ENCODE measurements at regions of chr17 and their contacts with region 1.

Region 1: DNA sequence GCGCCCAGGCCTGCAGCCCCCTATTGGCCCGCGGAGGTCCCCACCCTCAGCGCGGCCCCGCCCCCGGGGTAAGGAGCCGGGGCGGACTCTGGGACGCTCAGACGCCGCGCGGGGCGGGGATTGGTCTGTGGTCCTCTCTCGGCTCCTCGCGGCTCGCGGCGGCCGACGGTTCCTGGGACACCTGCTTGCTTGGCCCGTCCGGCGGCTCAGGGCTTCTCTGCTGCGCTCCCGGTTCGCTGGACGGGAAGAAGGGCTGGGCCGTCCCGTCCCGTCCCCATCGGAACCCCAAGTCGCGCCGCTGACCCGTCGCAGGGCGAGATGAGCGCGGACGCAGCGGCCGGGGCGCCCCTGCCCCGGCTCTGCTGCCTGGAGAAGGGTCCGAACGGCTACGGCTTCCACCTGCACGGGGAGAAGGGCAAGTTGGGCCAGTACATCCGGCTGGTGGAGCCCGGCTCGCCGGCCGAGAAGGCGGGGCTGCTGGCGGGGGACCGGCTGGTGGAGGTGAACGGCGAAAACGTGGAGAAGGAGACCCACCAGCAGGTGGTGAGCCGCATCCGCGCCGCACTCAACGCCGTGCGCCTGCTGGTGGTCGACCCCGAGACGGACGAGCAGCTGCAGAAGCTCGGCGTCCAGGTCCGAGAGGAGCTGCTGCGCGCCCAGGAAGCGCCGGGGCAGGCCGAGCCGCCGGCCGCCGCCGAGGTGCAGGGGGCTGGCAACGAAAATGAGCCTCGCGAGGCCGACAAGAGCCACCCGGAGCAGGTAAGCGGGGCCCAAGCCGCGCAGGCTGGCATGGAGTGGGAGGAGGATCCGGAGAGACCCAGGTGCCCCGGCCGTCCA is at the start of gene NHERF1:
- DNase-seq: peak; percentile 83 to 98 (median 92)
- ATAC-seq: peak; percentile 83
- H3K4me3 ChIP-seq: peak within 1 kb of the TSS; percentile 94 to 98
- H3K4me3 Mint-ChIP-seq: peak within 1 kb of the TSS; percentile 98
- H3K27ac ChIP-seq: peak within 1 kb of the TSS; percentile 60 to 80
- H3K27ac Mint-ChIP-seq: peak within 1 kb of the TSS; percentile 96
- H3K4me1 ChIP-seq: peaks cover 61% of the 10 kb centered on the region
- H3K4me1 Mint-ChIP-seq: peaks cover 67% of the 10 kb centered on the region
- H3K27me3 ChIP-seq: no peaks in the 10 kb centered on the region
- H3K27me3 Mint-ChIP-seq: no peaks in the 10 kb centered on the region
- CTCF ChIP-seq: no peak
- total RNA-seq, gene NHERF1: 72.5 to 73.7 TPM

Region 2: GRCh38 chr17:74190172-74190571 is 558.6 kb before region 1 on chr17:
- CTCF ChIA-PET with region 1: no interaction called
- POLR2A ChIA-PET with region 1: no interaction called
- intact Hi-C with region 1: no loop called
- DNase-seq: peak in 1 of 9 experiments; percentile 50
- ATAC-seq: peak; percentile 51
- H3K4me3 ChIP-seq: no peak overlapping the region
- H3K4me3 Mint-ChIP-seq: no peak overlapping the region
- H3K27ac ChIP-seq: no peak overlapping the region
- H3K27ac Mint-ChIP-seq: no peak overlapping the region
- H3K4me1 ChIP-seq: no peaks in the 10 kb centered on the region
- H3K4me1 Mint-ChIP-seq: peaks cover 3% of the 10 kb centered on the region
- H3K27me3 ChIP-seq: no peaks in the 10 kb centered on the region
- H3K27me3 Mint-ChIP-seq: peaks cover 14% of the 10 kb centered on the region
- CTCF ChIP-seq: no peak

Region 3: DNA sequence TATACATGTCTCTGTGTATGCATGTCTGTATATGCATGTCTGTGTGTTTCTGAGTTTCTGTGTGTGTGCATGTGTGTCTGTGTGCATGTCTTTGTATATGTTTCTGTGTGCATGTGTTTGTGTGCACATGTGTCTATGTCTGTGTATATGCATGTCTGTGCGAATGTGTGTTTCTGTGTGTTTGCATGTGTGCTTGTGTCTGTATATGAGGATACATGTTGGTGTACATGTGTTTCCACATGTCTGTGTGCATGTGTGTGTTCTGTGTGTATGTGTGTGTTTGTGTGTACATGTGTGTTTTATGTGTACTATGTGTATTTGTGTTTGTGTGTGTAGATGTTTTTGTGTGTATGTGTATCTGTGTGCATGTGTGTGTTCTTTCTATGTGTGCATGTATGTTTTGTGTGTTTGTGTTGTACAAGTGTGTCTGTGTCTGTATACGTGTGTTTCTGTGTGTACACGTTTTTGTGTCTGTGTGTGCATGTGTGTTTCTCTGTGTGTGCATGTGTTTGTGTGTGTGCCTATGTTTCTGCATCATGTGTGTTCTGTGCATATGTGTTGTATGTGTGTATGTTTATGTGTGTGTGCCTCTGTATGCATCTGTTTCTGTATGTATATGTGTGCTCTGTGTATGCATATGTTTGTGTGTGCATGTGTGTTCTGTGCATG is 20.6 kb before region 1 on chr17:
- CTCF ChIA-PET with region 1: no interaction called
- POLR2A ChIA-PET with region 1: no interaction called
- intact Hi-C with region 1: no loop called
- DNase-seq: no peak
- ATAC-seq: no peak
- H3K4me3 ChIP-seq: no peak overlapping the region
- H3K4me3 Mint-ChIP-seq: no peak overlapping the region
- H3K27ac ChIP-seq: no peak overlapping the region
- H3K27ac Mint-ChIP-seq: no peak overlapping the region
- H3K4me1 ChIP-seq: peaks cover 20% of the 10 kb centered on the region
- H3K4me1 Mint-ChIP-seq: peaks cover 15% of the 10 kb centered on the region
- H3K27me3 ChIP-seq: no peaks in the 10 kb centered on the region
- H3K27me3 Mint-ChIP-seq: no peaks in the 10 kb centered on the region
- CTCF ChIP-seq: no peak

Region 4: DNA sequence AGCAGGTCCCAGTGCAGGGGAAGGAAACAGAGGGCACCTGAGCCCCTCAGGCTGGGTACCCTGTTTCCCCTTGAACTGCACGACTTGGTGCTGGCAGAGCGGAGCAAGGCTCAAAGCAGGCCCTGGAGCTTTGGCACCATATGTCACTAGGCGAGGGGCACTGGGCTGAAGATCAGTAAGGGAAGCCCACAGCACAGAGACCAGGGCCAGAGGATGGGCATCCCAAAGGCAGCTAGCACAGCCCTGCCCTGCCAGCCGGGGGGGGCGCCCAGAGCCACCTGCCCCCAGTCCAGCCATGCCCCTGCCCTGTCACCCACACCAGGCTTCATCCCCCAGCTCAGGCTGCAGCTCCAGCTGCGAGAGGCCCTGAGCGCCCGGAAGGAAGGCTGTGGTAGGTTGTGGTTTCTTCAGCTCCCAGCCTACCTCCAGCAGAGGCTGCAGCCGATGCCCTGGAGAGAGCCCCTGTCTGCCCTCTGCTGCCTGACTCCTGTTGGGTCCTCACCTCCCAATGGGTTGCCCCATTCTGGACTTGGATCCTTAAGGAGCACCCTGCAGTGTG is 10.6 kb after region 1 on chr17:
- CTCF ChIA-PET with region 1: interaction called, 73 read pairs
- POLR2A ChIA-PET with region 1: interaction called, 47 read pairs
- intact Hi-C with region 1: loop called (anchors 1 kb)
- DNase-seq: peak in 7 of 9 experiments; percentile 47 to 85 (median 71)
- ATAC-seq: peak; percentile 83
- H3K4me3 ChIP-seq: peak overlapping the region; percentile 37 to 41
- H3K4me3 Mint-ChIP-seq: peak overlapping the region; percentile 81
- H3K27ac ChIP-seq: peak overlapping the region; percentile 38 to 62
- H3K27ac Mint-ChIP-seq: peak overlapping the region; percentile 90
- H3K4me1 ChIP-seq: peaks cover 84% of the 10 kb centered on the region
- H3K4me1 Mint-ChIP-seq: peaks cover 75% of the 10 kb centered on the region
- H3K27me3 ChIP-seq: no peaks in the 10 kb centered on the region
- H3K27me3 Mint-ChIP-seq: no peaks in the 10 kb centered on the region
- CTCF ChIP-seq: no peak

Region 5: DNA sequence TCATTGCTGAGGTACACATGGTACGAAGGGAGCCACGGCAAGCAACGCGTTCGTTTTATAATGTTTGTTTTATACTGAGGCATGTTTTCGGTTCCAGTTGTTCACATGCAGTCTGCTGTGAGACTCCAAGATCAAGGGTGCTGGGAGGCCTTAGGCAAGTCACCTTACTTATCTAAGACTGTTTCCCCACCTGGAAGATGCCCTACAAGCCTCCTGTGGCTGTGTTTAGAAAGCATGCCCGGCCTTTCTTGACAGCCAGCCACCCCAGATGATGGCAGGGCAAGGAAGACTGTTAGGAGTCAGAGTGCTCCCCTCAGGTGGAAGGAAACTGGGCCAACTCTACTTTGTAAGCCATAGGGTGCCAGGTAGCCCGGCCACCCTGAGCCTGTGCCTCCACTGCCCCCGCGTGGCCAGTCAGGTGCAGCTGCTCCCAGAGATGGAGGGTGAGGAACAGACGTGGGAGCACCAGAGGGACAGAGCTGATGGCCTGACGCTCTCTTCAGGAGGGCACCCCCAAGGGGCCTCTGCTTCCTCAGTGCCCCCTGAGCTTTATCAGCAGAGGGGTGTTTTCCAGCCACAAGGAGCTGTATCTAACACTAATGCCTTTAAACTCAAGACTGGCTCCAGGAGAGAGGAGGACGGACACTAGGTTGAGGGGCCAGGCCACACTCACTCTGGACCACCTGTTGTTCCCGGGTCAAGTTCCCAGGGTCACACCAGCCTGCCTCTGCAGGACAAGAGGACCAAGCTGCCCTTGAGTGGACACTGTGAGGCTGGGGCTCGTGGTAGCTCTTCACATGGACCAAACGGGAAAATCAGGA is 22.0 kb after region 1 on chr17:
- CTCF ChIA-PET with region 1: interaction called, 62 read pairs
- POLR2A ChIA-PET with region 1: interaction called, 23 read pairs
- intact Hi-C with region 1: loop called (anchors 1 kb)
- DNase-seq: peak; percentile 62 to 88 (median 78)
- ATAC-seq: peak; percentile 95
- H3K4me3 ChIP-seq: no peak overlapping the region
- H3K4me3 Mint-ChIP-seq: no peak overlapping the region
- H3K27ac ChIP-seq: peak overlapping the region in 1 of 2 experiments; percentile 18
- H3K27ac Mint-ChIP-seq: peak overlapping the region; percentile 81
- H3K4me1 ChIP-seq: peaks cover 21% of the 10 kb centered on the region
- H3K4me1 Mint-ChIP-seq: peaks cover 36% of the 10 kb centered on the region
- H3K27me3 ChIP-seq: no peaks in the 10 kb centered on the region
- H3K27me3 Mint-ChIP-seq: no peaks in the 10 kb centered on the region
- CTCF ChIP-seq: peak; percentile 70

Region 6: DNA sequence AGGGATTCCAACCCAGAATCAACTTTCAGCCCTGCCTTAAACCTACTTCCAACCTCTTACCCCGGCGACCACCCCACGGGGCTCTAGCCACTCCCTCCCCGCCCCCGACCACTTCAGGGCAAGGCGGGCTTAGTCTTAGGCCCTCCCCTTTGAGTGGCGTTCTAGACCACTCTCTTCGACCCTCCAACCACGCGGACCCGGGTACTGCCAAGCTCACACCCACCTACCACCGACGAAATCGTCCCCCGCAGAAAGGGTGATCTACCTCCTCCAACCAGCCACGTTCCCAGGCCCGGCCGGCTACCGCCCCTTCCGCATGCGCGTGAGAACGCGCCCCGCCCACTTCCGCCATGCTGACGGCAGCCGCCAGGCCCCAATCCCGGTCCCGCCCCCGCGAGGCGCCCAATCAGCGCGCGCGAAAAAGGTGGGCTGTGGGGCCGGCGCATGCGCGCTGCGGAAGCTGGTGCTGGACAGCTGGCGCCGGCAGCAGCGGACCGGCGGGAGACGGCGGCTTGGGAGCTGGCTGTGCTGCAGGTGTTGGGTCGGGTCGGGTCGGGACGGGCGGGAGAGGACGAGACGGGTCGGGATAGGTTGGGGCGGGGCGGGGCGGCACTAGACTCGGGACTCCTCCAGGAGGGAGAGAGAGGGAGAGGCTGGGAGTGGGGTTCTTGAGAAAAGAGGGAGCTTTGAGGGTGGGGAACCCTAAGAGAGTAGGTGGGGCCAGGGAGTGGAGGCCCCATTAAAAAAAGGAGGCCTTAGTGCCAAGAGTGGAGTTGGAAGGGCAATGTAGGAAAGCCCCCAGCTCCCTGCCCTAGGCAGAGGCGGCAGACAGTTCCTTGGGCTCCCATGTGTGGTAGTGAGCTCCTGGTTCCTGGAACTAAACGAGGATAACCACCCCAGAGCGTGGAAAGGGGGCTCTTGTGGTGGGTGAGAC is 27.6 kb after region 1 on chr17 and contains the start of gene NAT9:
- CTCF ChIA-PET with region 1: interaction called, 62 read pairs
- POLR2A ChIA-PET with region 1: interaction called, 23 read pairs
- intact Hi-C with region 1: loop called (anchors 1 kb)
- DNase-seq: peak; percentile 97 to 100 (median 99)
- ATAC-seq: peak; percentile 74
- H3K4me3 ChIP-seq: peak within 1 kb of the TSS; percentile 68 to 83
- H3K4me3 Mint-ChIP-seq: peak within 1 kb of the TSS; percentile 99
- H3K27ac ChIP-seq: peak within 1 kb of the TSS; percentile 56 to 76
- H3K27ac Mint-ChIP-seq: peak within 1 kb of the TSS; percentile 97
- H3K4me1 ChIP-seq: peaks cover 47% of the 10 kb centered on the region
- H3K4me1 Mint-ChIP-seq: peaks cover 62% of the 10 kb centered on the region
- H3K27me3 ChIP-seq: no peaks in the 10 kb centered on the region
- H3K27me3 Mint-ChIP-seq: no peaks in the 10 kb centered on the region
- CTCF ChIP-seq: no peak
- total RNA-seq, gene NAT9: 37.9 to 41.1 TPM

Region 7: GRCh38 chr17:74864866-74865395 is 116.2 kb after region 1 on chr17:
- CTCF ChIA-PET with region 1: interaction called, 30 read pairs
- POLR2A ChIA-PET with region 1: no interaction called
- intact Hi-C with region 1: loop called (anchors 1 to 2 kb)
- DNase-seq: peak; percentile 46 to 84 (median 73)
- ATAC-seq: peak; percentile 75
- H3K4me3 ChIP-seq: no peak overlapping the region
- H3K4me3 Mint-ChIP-seq: no peak overlapping the region
- H3K27ac ChIP-seq: no peak overlapping the region
- H3K27ac Mint-ChIP-seq: no peak overlapping the region
- H3K4me1 ChIP-seq: peaks cover 21% of the 10 kb centered on the region
- H3K4me1 Mint-ChIP-seq: peaks cover 13% of the 10 kb centered on the region
- H3K27me3 ChIP-seq: peaks cover 8 to 21% of the 10 kb centered on the region in 2 experiments
- H3K27me3 Mint-ChIP-seq: peaks cover 13% of the 10 kb centered on the region
- CTCF ChIP-seq: peak; percentile 92

Measured in CD8-positive, alpha-beta T cell (primary cell).